Activated CD4-positive, alpha-beta memory T cell treated with anti-CD3 and anti-CD28 coated beads for 36 hours (primary cell): ENCODE measurements at regions of chr14 and their contacts with region 1.

Region 1: DNA sequence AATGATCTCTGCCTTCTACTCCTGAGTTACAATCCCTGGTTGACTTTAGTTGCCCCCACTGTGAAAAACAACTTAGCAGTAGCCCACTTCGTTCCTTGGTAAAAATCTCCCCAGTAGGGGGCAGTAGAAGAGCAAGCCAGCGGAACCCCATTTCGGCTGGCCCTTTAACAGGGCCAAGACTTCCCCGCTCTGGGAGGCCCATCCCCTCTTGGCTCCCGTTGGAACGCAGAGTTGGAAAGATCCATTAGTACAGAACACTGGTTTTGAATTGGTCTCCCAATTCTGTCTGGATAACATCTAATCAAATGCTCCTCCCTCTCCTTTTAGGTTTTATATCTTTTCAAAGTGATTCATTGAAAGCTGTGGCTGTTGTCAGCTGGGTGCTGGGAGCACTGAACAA is 1133.3 kb downstream of the BCL11B start:
- DNase-seq: peak; percentile 73
- H3K4me3 Mint-ChIP-seq: peak overlapping the region; percentile 42
- H3K27ac Mint-ChIP-seq: peak overlapping the region; percentile 80
- H3K4me1 Mint-ChIP-seq: peaks cover 76% of the 10 kb centered on the region
- H3K27me3 Mint-ChIP-seq: no peaks in the 10 kb centered on the region

Region 2: DNA sequence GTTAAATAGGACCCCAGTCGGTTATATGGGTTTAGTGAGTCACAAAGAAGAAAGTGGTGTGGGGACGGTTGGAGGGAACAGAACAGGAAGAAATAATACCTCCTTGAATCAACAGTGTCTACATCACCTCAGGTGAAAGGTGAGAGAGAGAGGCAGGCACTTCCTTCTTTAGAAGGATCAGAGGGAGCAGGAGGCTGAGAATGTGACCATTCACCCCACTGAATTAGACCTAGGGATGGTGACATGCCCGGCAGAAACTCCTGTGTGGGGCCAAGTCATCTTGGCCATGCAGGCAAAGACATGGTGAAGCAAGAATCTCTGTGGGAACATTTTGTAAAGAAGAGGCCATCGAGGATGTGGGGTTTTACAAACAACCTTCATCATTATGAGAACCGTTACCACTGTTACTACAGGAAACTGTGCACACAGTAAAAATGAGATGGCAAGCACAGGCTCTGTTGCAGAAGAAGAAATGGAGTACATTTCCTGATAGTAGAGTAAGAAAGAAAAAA is 144.6 kb before region 1 on chr14:
- CTCF ChIA-PET with region 1: no interaction called
- POLR2A ChIA-PET with region 1: no interaction called
- intact Hi-C with region 1: loop called (anchors 5 kb)
- DNase-seq: peak; percentile 59
- H3K4me3 Mint-ChIP-seq: peak overlapping the region; percentile 34
- H3K27ac Mint-ChIP-seq: peak overlapping the region; percentile 94
- H3K4me1 Mint-ChIP-seq: peaks cover 55% of the 10 kb centered on the region
- H3K27me3 Mint-ChIP-seq: no peaks in the 10 kb centered on the region

Region 3: GRCh38 chr14:98120831-98121464 is 17.7 kb before region 1 on chr14:
- CTCF ChIA-PET with region 1: interaction called, 12 read pairs
- POLR2A ChIA-PET with region 1: no interaction called
- intact Hi-C with region 1: no loop called
- DNase-seq: peak; percentile 39
- H3K4me3 Mint-ChIP-seq: no peak overlapping the region
- H3K27ac Mint-ChIP-seq: no peak overlapping the region
- H3K4me1 Mint-ChIP-seq: peaks cover 26% of the 10 kb centered on the region
- H3K27me3 Mint-ChIP-seq: no peaks in the 10 kb centered on the region

Region 4: DNA sequence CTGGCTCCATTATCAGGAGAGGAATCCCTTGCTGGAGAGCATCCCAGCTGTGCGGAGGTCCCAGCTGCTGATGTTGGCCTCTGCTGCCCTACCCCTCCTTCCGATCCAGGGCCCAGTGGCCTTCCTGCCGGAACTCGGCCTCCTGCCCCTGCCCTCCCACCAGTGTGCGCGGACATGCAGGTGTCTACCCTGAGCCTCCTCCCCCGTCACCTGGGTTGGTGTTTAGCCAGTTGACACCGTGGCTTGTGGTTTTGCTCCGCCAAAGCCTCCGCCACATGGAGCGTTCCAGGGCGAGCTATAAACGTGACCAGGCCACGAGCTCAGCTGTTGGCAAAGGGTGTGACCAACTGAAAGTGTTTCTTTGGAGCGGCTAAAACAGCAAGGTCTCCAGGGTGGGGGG is 29.0 kb after region 1 on chr14:
- CTCF ChIA-PET with region 1: interaction called, 32 read pairs
- POLR2A ChIA-PET with region 1: interaction called, 16 read pairs
- intact Hi-C with region 1: loop called (anchors 1 kb)
- DNase-seq: peak; percentile 54
- H3K4me3 Mint-ChIP-seq: peak overlapping the region; percentile 17
- H3K27ac Mint-ChIP-seq: peak overlapping the region; percentile 97
- H3K4me1 Mint-ChIP-seq: peaks cover 67% of the 10 kb centered on the region
- H3K27me3 Mint-ChIP-seq: no peaks in the 10 kb centered on the region

Region 5: GRCh38 chr14:98234208-98234607 is 95.5 kb after region 1 on chr14:
- CTCF ChIA-PET with region 1: interaction called, 3 read pairs
- POLR2A ChIA-PET with region 1: interaction called, 3 read pairs
- intact Hi-C with region 1: loop called (anchors 1 kb)
- DNase-seq: peak; percentile 72
- H3K4me3 Mint-ChIP-seq: no peak overlapping the region
- H3K27ac Mint-ChIP-seq: peak overlapping the region; percentile 36
- H3K4me1 Mint-ChIP-seq: peaks cover 71% of the 10 kb centered on the region
- H3K27me3 Mint-ChIP-seq: no peaks in the 10 kb centered on the region

Region 6: GRCh38 chr14:99230208-99231151 is 1091.8 kb after region 1 on chr14:
- CTCF ChIA-PET with region 1: interaction called, 15 read pairs
- POLR2A ChIA-PET with region 1: no interaction called
- intact Hi-C with region 1: no loop called
- DNase-seq: peak; percentile 94
- H3K4me3 Mint-ChIP-seq: peak overlapping the region; percentile 68
- H3K27ac Mint-ChIP-seq: peak overlapping the region; percentile 96
- H3K4me1 Mint-ChIP-seq: peaks cover 95% of the 10 kb centered on the region
- H3K27me3 Mint-ChIP-seq: no peaks in the 10 kb centered on the region